A673 (cell line): ENCODE measurements at regions of chr10 and their contacts with region 1.

Region 1: DNA sequence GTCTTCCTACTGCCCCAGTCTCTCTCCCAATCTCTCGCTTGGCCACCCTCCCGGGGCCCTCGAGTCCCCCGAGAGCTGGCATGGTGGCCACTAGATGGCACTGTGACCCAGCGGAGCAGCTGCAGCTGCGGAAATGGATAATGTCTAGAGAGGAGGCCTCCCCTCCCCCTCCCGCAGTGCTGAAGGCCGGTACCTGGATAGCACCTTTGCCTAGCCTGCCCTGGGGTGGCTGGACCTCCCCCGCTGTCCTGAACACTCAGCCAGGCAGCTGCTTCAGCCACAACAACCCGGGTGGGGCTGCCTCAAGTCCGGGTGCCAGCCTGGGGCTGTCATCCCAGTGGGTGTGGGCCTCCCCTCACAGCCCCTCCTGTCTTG is 65.2 kb downstream of the GOLGA7B start:
- DNase-seq: peak; percentile 75
- H3K4me3 ChIP-seq: no peak overlapping the region
- H3K27ac ChIP-seq: no peak overlapping the region
- H3K4me1 ChIP-seq: no peaks in the 10 kb centered on the region
- H3K27me3 ChIP-seq: peaks cover 70% of the 10 kb centered on the region
- CTCF ChIP-seq: peak; percentile 94

Region 2: DNA sequence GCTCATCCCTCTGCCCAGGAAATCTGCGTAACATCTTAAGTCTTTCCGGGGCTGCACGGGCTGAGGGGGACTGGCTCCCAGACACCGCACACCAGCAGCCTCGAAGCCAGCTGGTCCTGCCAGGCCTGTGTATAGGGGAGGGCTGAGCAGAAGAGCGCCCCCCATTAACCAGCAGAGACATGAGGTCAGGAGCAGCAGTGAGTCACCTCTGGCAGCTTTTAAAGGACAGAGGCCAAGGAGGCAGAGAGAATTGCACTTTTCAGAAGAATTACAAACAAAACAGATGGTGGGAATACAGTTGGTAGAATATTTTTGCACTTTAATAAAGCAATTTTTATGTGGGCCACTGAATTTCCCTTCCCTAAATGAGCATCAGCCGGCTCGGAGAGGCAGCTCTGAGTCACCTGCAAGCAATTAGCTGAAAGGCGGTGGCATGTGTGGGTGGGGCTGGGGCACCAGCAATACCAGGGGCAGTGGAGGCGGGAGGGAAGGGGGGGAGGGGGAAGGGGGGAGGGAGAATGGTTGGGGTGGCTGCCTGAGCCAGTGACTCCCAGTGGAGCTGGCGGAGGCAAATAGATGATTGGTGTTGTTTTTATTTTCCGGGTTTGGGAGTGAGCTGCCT is 26.1 kb before region 1 on chr10:
- CTCF ChIA-PET with region 1: interaction called, 12 read pairs
- POLR2A ChIA-PET with region 1: no interaction called
- intact Hi-C with region 1: no loop called
- DNase-seq: peak; percentile 53
- H3K4me3 ChIP-seq: no peak overlapping the region
- H3K27ac ChIP-seq: no peak overlapping the region
- H3K4me1 ChIP-seq: peaks cover 10% of the 10 kb centered on the region
- H3K27me3 ChIP-seq: no peaks in the 10 kb centered on the region
- CTCF ChIP-seq: no peak

Region 3: GRCh38 chr10:98028168-98028770 is 113.4 kb after region 1 on chr10:
- CTCF ChIA-PET with region 1: interaction called, 4 read pairs
- POLR2A ChIA-PET with region 1: no interaction called
- intact Hi-C with region 1: loop called (anchors 5 kb)
- DNase-seq: peak; percentile 76
- H3K4me3 ChIP-seq: no peak overlapping the region
- H3K27ac ChIP-seq: no peak overlapping the region
- H3K4me1 ChIP-seq: peaks cover 9% of the 10 kb centered on the region
- H3K27me3 ChIP-seq: peaks cover 90% of the 10 kb centered on the region
- CTCF ChIP-seq: peak; percentile 90

Region 4: GRCh38 chr10:98045785-98046389 is 131.1 kb after region 1 on chr10:
- CTCF ChIA-PET with region 1: interaction called, 32 read pairs
- POLR2A ChIA-PET with region 1: no interaction called
- intact Hi-C with region 1: loop called (anchors 1 kb)
- DNase-seq: peak; percentile 68
- H3K4me3 ChIP-seq: no peak overlapping the region
- H3K27ac ChIP-seq: no peak overlapping the region
- H3K4me1 ChIP-seq: no peaks in the 10 kb centered on the region
- H3K27me3 ChIP-seq: peaks cover 61% of the 10 kb centered on the region
- CTCF ChIP-seq: peak; percentile 88

Region 5: DNA sequence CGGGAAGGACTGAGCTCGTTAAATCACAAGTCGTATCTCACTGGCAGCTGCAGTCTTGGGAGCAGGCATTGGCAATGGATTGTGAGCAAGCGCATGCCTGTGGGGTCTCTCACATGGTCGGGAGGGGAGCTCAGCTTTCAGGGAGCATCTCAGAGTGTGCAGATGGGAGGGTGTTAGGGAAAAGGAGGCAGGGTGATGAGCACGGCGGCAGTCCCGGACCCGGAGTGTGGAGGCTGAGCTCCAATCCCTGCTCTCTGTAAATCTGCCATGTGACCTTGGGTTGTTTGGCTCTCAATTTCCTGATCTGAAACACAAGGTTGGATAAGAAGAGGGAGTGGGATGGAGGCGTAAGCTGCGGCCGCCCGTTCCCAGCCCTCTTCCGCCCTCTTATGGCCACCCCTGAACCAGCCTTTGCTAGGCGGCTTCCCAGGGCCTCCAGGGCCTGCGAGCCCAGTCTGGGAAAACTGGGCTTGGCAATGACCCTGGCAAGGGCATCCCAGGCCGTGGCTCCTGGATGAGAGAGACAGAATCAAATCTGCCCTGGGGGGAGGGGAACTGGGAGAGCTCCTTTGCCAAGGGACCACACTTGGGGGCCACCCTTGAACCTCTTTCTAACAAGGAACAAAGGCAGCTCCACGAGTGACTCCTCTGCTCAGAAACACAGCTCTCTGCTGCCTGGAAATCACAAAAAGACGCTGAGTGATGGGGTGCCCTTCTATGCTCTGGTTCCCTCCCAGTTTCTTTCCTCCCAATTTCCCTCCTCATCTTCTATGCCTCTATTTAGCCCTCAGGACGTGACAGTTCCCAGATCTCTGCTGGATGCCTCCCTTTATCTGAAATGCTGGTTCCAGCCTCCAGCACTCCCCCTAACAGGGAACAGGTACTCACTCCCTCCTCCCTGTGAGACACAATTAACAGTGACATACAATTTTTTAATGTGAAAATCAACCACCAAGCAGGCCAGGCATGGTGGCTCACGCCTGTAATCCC is 394.8 kb after region 1 on chr10:
- CTCF ChIA-PET with region 1: interaction called, 5 read pairs
- POLR2A ChIA-PET with region 1: no interaction called
- intact Hi-C with region 1: loop called (anchors 2 kb)
- DNase-seq: peak; percentile 72
- H3K4me3 ChIP-seq: no peak overlapping the region
- H3K27ac ChIP-seq: no peak overlapping the region
- H3K4me1 ChIP-seq: no peaks in the 10 kb centered on the region
- H3K27me3 ChIP-seq: no peaks in the 10 kb centered on the region
- CTCF ChIP-seq: peak; percentile 81